Caco-2 (cell line): ENCODE measurements at regions of chr17 and their contacts with region 1.

Region 1: GRCh38 chr17:63445979-63446691 is at the start of gene CYB561:
- DNase-seq: peak; percentile 91 to 97
- H3K4me3 ChIP-seq: peak within 1 kb of the TSS; percentile 85
- H3K4me3 Mint-ChIP-seq: peak within 1 kb of the TSS; percentile 72
- H3K27ac Mint-ChIP-seq: peak within 1 kb of the TSS; percentile 90
- H3K4me1 ChIP-seq: peaks cover 14% of the 10 kb centered on the region
- H3K4me1 Mint-ChIP-seq: peaks cover 7% of the 10 kb centered on the region
- H3K27me3 ChIP-seq: no peaks in the 10 kb centered on the region
- H3K27me3 Mint-ChIP-seq: no peaks in the 10 kb centered on the region
- CTCF ChIP-seq: peak; percentile 62 to 77
- total RNA-seq, gene CYB561: 46.3 and 48.3 TPM in 2 replicates

Region 2: DNA sequence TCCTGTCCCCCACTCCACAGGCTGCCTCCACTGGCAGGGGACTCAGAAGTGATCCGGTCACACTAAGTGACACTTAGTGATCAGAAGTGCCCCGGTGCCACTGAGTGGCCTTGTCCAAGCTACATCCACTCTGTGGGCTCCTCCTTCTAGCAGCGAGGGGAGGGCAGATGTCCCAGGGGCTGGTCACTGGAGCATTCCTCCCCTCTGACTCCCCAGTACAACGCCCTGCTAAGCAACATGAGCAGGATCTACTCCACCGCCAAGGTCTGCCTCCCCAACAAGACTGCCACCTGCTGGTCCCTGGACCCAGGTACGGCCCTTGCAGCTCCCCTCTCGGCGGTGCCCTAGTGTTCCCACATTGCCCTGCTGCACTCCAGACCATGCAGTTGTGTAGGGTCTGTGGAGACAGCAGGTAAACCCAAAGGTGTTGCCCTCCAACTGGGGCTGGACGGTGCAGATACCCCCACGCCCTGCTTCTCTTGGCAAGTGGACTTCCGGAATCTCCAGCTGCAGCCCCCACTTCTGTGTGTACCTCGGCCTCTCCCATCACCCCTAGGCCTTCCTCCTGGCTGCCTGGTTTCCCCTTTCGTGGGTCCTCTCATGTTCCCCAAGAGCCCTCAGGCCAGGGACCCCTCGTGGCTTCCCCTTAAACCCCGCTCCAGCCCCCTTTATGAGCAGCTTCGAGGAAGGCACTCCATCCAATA is 32.8 kb after region 1 on chr17:
- CTCF ChIA-PET with region 1: interaction called, 14 read pairs
- POLR2A ChIA-PET with region 1: no interaction called
- intact Hi-C with region 1: loop called (anchors 1 kb)
- DNase-seq: peak; percentile 89 to 91
- H3K4me3 ChIP-seq: no peak overlapping the region
- H3K4me3 Mint-ChIP-seq: peak overlapping the region; percentile 50
- H3K27ac Mint-ChIP-seq: no peak overlapping the region
- H3K4me1 ChIP-seq: peaks cover 13% of the 10 kb centered on the region
- H3K4me1 Mint-ChIP-seq: peaks cover 10% of the 10 kb centered on the region
- H3K27me3 ChIP-seq: no peaks in the 10 kb centered on the region
- H3K27me3 Mint-ChIP-seq: peaks cover 12% of the 10 kb centered on the region
- CTCF ChIP-seq: peak; percentile 67 to 97

Region 3: DNA sequence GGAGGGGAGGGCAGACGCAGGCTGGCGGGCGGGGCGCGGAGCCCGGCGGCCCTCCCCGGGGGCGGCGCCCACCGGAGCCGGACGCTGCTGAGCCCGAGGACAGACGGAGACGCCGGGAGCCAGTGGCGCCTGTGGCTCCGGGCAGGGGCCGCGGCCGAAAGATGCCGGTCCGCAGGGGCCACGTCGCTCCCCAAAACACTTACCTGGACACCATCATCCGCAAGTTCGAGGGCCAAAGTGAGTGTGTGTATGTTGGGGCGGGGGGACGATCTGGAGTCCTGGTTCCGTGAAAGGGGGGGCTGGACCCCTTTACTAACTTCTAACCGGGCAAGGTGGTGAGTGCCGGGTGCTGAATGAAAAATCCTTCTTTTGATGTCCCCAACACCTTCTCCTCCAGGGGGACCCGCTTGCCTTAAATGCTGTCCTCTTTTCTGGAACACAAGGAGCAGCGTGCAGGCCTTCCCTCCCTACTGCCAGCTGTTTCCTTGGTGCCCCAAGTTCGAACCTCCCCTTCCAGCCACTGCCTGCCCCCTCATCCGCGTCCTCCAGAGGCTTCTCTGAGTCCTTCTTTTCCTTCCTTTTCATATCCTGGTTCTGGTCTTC is 77.2 kb after region 1 on chr17 and contains the start of gene KCNH6:
- CTCF ChIA-PET with region 1: interaction called, 3 read pairs
- POLR2A ChIA-PET with region 1: no interaction called
- intact Hi-C with region 1: loop called (anchors 2 kb)
- DNase-seq: no peak
- H3K4me3 ChIP-seq: peak within 1 kb of the TSS; percentile 35
- H3K4me3 Mint-ChIP-seq: peak within 1 kb of the TSS; percentile 57
- H3K27ac Mint-ChIP-seq: no peak within 1 kb of the TSS
- H3K4me1 ChIP-seq: 0 out of 2 replicates have a peak, but pooled peaks cover 4% of the 10 kb centered on the region
- H3K4me1 Mint-ChIP-seq: peaks cover 8% of the 10 kb centered on the region
- H3K27me3 ChIP-seq: no peaks in the 10 kb centered on the region
- H3K27me3 Mint-ChIP-seq: peaks cover 8% of the 10 kb centered on the region
- CTCF ChIP-seq: no peak
- total RNA-seq, gene KCNH6: not detected in 2 replicates

Region 4: GRCh38 chr17:63549946-63550807 is 104.0 kb after region 1 on chr17 and contains the start of gene DCAF7:
- CTCF ChIA-PET with region 1: no interaction called
- POLR2A ChIA-PET with region 1: no interaction called
- intact Hi-C with region 1: loop called (anchors 1 kb)
- DNase-seq: peak; percentile 99 to 100
- H3K4me3 ChIP-seq: peak within 1 kb of the TSS; percentile 88
- H3K4me3 Mint-ChIP-seq: peak within 1 kb of the TSS; percentile 98
- H3K27ac Mint-ChIP-seq: peak within 1 kb of the TSS; percentile 96
- H3K4me1 ChIP-seq: no peaks in the 10 kb centered on the region
- H3K4me1 Mint-ChIP-seq: peaks cover 4% of the 10 kb centered on the region
- H3K27me3 ChIP-seq: no peaks in the 10 kb centered on the region
- H3K27me3 Mint-ChIP-seq: no peaks in the 10 kb centered on the region
- CTCF ChIP-seq: no peak
- total RNA-seq, gene DCAF7: 91.2 and 94.5 TPM in 2 replicates

Region 5: GRCh38 chr17:63578769-63579259 is 132.7 kb after region 1 on chr17:
- CTCF ChIA-PET with region 1: interaction called, 10 read pairs
- POLR2A ChIA-PET with region 1: no interaction called
- intact Hi-C with region 1: no loop called
- DNase-seq: no peak
- H3K4me3 ChIP-seq: no peak overlapping the region
- H3K4me3 Mint-ChIP-seq: no peak overlapping the region
- H3K27ac Mint-ChIP-seq: peak overlapping the region; percentile 83
- H3K4me1 ChIP-seq: peaks cover 6% of the 10 kb centered on the region; the same call in 1 of the 2 replicates
- H3K4me1 Mint-ChIP-seq: peaks cover 10% of the 10 kb centered on the region
- H3K27me3 ChIP-seq: no peaks in the 10 kb centered on the region
- H3K27me3 Mint-ChIP-seq: no peaks in the 10 kb centered on the region
- CTCF ChIP-seq: no peak

Region 6: GRCh38 chr17:63611354-63611753 is 165.2 kb after region 1 on chr17:
- CTCF ChIA-PET with region 1: interaction called, 4 read pairs
- POLR2A ChIA-PET with region 1: no interaction called
- intact Hi-C with region 1: loop called (anchors 5 kb)
- DNase-seq: no peak
- H3K4me3 ChIP-seq: no peak overlapping the region
- H3K4me3 Mint-ChIP-seq: no peak overlapping the region
- H3K27ac Mint-ChIP-seq: no peak overlapping the region
- H3K4me1 ChIP-seq: no peaks in the 10 kb centered on the region
- H3K4me1 Mint-ChIP-seq: no peaks in the 10 kb centered on the region
- H3K27me3 ChIP-seq: no peaks in the 10 kb centered on the region
- H3K27me3 Mint-ChIP-seq: peaks cover 3% of the 10 kb centered on the region
- CTCF ChIP-seq: no peak